ENCODE measurements at regions of chrX and their contacts with region 1.

Region 1: GRCh38 chrX:48498374-48498809 is 10.4 kb upstream of the PORCN start:
- DNase-seq: no peak
- ATAC-seq: no peak
- H3K4me3 ChIP-seq: no peak overlapping the region
- H3K27ac ChIP-seq: no peak overlapping the region
- H3K4me1 ChIP-seq: peaks cover 3% of the 10 kb centered on the region
- H3K27me3 ChIP-seq: no peaks in the 10 kb centered on the region
- CTCF ChIP-seq: no peak
- POLR2A ChIP-seq: no peak

Region 2: GRCh38 chrX:48086082-48086481 is 412.3 kb before region 1 on chrX:
- intact Hi-C with region 1: loop called (anchors 5 kb)
- DNase-seq: no peak
- ATAC-seq: peak; percentile 68
- H3K4me3 ChIP-seq: no peak overlapping the region
- H3K27ac ChIP-seq: peak overlapping the region in 1 of 4 donors; percentile 21
- H3K4me1 ChIP-seq: no peaks in the 10 kb centered on the region
- H3K27me3 ChIP-seq: no peaks in the 10 kb centered on the region
- CTCF ChIP-seq: no peak
- POLR2A ChIP-seq: no peak